ENCODE measurements at regions of chr12 and their contacts with region 1.

Region 1: GRCh38 chr12:89352492-89353187 is at the start of gene DUSP6:
- DNase-seq: peak; percentile 99
- H3K4me3 Mint-ChIP-seq: peak within 1 kb of the TSS; percentile 82
- H3K27ac Mint-ChIP-seq: peak within 1 kb of the TSS; percentile 96
- H3K4me1 Mint-ChIP-seq: peaks cover 40% of the 10 kb centered on the region
- H3K27me3 Mint-ChIP-seq: no peaks in the 10 kb centered on the region
- CTCF ChIP-seq: no peak
- total RNA-seq, gene DUSP6: 99.9 and 149 TPM in 2 replicates

Region 2: GRCh38 chr12:89051065-89051677 is 301.5 kb before region 1 on chr12:
- CTCF ChIA-PET with region 1: interaction called, 4 read pairs
- POLR2A ChIA-PET with region 1: interaction called, 4 read pairs
- intact Hi-C with region 1: loop called (anchors 1 kb)
- DNase-seq: peak; percentile 80
- H3K4me3 Mint-ChIP-seq: no peak overlapping the region
- H3K27ac Mint-ChIP-seq: no peak overlapping the region
- H3K4me1 Mint-ChIP-seq: no peaks in the 10 kb centered on the region
- H3K27me3 Mint-ChIP-seq: no peaks in the 10 kb centered on the region
- CTCF ChIP-seq: peak; percentile 74

Region 3: DNA sequence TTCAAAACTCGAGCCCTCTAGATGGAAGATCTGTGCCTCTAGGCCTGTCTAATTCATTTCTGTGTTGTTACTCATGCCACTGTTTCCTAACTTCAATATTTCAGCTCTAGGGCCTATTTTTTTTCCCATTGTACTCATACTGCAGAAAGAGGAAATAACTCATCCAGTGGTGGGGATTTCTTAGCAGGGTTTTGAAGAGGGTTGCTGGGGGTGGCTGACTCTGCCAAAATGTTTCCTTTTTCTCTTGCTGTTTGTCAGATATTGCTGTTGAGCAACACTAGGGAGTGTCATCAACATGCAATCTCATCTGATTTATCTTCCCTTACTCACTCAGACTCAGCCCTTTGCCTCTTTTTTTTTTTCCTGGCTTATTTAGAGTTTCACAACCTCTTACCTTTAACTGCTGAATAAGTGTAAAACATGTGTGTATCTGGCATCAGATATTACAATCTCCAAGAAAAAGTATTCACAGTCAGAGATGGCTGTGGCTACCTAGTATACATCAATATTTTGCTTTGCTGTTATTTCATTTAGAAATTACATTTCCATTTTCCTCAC is 189.9 kb before region 1 on chr12:
- CTCF ChIA-PET with region 1: interaction called, 4 read pairs
- POLR2A ChIA-PET with region 1: interaction called, 138 read pairs
- intact Hi-C with region 1: loop called (anchors 1 kb)
- DNase-seq: peak; percentile 99
- H3K4me3 Mint-ChIP-seq: no peak overlapping the region
- H3K27ac Mint-ChIP-seq: no peak overlapping the region
- H3K4me1 Mint-ChIP-seq: peaks cover 17% of the 10 kb centered on the region
- H3K27me3 Mint-ChIP-seq: no peaks in the 10 kb centered on the region
- CTCF ChIP-seq: no peak

Region 4: GRCh38 chr12:89192428-89192827 is 160.2 kb before region 1 on chr12:
- CTCF ChIA-PET with region 1: no interaction called
- POLR2A ChIA-PET with region 1: no interaction called
- intact Hi-C with region 1: no loop called
- DNase-seq: no peak
- H3K4me3 Mint-ChIP-seq: no peak overlapping the region
- H3K27ac Mint-ChIP-seq: no peak overlapping the region
- H3K4me1 Mint-ChIP-seq: no peaks in the 10 kb centered on the region
- H3K27me3 Mint-ChIP-seq: no peaks in the 10 kb centered on the region
- CTCF ChIP-seq: no peak

Region 5: GRCh38 chr12:89225808-89226411 is 126.7 kb before region 1 on chr12:
- CTCF ChIA-PET with region 1: interaction called, 4 read pairs
- POLR2A ChIA-PET with region 1: interaction called, 8 read pairs
- intact Hi-C with region 1: loop called (anchors 2 kb)
- DNase-seq: peak; percentile 96
- H3K4me3 Mint-ChIP-seq: peak overlapping the region; percentile 48
- H3K27ac Mint-ChIP-seq: peak overlapping the region; percentile 93
- H3K4me1 Mint-ChIP-seq: peaks cover 30% of the 10 kb centered on the region
- H3K27me3 Mint-ChIP-seq: no peaks in the 10 kb centered on the region
- CTCF ChIP-seq: no peak

Region 6: DNA sequence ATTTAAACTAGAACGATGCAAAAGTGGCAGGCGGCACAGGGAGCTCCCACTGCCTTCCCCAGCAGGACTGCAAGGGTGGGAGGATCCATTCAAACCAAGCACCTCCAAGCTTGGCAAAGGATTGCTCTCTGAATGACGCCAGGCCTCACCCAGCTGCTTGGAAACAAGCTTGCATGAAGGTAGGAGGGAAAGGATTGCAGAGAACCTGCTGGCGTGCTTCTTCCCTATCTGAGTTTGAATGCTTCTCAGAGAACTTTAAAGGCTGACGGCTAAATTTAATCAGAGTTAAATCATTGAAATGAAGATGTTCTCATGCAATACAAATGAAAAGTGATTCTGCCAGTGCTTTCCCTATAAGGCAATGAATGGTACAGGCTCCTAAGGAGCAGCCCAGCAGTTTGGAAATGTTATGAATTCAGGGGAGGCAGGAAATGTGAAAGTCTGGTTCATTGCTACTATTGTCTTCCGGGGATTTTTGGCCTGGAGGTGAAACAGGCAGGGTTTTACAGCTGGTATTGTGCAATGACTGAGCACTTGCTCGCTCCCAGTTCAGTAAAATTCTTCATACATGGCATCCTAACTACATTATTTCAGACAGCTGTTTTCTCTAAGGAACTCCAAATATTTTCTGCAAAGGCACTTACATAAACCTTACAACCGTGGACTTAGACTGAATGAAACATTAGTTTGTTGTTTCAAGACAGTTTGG is 31.6 kb after region 1 on chr12:
- CTCF ChIA-PET with region 1: interaction called, 5 read pairs
- POLR2A ChIA-PET with region 1: interaction called, 60 read pairs
- intact Hi-C with region 1: no loop called
- DNase-seq: peak; percentile 90
- H3K4me3 Mint-ChIP-seq: peak overlapping the region; percentile 59
- H3K27ac Mint-ChIP-seq: peak overlapping the region; percentile 53
- H3K4me1 Mint-ChIP-seq: peaks cover 25% of the 10 kb centered on the region
- H3K27me3 Mint-ChIP-seq: no peaks in the 10 kb centered on the region
- CTCF ChIP-seq: no peak

Region 7: DNA sequence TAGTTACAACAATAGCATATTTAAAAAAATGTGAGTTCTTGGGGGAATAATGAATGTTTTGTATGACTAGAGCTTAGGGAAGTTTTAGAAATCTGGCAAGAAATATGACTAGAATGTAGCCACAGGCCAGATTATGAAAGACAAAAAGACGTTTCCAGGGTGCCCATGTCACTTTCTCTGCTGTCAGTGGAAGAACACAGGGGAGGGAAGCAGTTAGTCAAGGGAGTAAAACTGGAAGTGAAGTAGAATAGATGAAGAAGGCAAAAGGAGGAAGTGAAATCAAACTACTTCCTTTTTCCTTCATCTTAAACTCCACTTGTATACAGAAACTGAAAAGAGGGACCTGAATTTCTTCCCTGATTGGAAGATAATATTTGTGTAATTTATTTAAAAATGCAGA is 437.2 kb after region 1 on chr12:
- CTCF ChIA-PET with region 1: no interaction called
- POLR2A ChIA-PET with region 1: no interaction called
- intact Hi-C with region 1: no loop called
- DNase-seq: no peak
- H3K4me3 Mint-ChIP-seq: no peak overlapping the region
- H3K27ac Mint-ChIP-seq: no peak overlapping the region
- H3K4me1 Mint-ChIP-seq: peaks cover 5% of the 10 kb centered on the region
- H3K27me3 Mint-ChIP-seq: no peaks in the 10 kb centered on the region
- CTCF ChIP-seq: no peak

Measured in MCF 10A (cell line).